T-cell (primary cell): ENCODE measurements at regions of chrX and their contacts with region 1.

Region 1: GRCh38 chrX:129976441-129976840 is 6.0 kb upstream of the BCORL1 start:
- DNase-seq: no peak
- ATAC-seq: no peak
- H3K4me3 ChIP-seq: no peak overlapping the region
- H3K4me3 Mint-ChIP-seq: no peak overlapping the region
- H3K27ac ChIP-seq: no peak overlapping the region
- H3K27ac Mint-ChIP-seq: no peak overlapping the region
- H3K4me1 ChIP-seq: peaks cover 3 to 14% of the 10 kb centered on the region in 2 experiments
- H3K4me1 Mint-ChIP-seq: peaks cover 3 to 21% (median 11%) of the 10 kb centered on the region in 3 donors
- H3K27me3 ChIP-seq: no peaks in the 10 kb centered on the region
- H3K27me3 Mint-ChIP-seq: peaks cover 0 to 6% of the 10 kb centered on the region in 2 donors

Region 2: DNA sequence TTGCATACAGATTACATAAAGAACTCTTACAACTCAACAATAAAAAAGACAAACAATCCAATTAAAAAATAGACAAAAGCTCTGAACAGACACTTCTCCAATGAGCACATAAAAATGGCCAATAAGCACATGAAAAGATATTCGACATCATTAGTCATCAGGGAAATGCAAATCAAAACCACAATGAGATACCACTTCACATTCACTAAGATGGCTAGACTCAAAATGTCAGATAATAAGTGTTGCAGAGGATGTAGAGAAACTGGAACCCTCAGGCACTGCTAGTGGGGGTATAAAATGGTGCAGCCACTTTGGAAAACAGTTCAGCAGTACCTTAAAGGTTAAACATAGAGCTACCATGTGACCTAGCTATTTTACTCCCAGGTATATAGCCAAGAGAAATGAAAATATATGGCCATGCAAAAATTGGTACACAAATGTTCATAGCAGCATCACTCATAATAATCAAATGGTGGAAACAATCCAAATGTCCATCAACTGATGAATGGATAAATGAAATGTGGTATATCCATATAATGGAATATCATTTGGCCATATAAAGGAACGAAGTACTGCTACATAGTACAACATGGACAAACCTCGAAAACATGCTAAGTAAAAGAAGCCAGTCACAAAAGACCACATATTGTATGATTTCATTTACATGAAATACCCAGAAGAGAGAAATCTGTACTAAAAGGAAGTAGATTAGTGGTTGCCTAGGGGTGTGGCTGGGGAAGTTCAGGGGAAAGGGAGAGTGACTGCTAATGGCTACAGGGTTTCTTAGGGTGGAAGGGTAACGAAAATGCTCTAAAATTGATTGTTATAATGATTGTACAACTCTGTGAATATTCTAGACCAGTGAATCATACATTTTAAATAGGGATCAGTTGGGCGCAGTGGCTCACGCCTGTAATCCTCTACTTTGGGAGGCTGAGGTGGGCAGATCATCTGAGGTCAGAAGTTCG is 167.3 kb before region 1 on chrX:
- CTCF ChIA-PET with region 1: no interaction called
- POLR2A ChIA-PET with region 1: no interaction called
- DNase-seq: no peak
- ATAC-seq: peak in 2 of 4 experiments; percentile 36 to 60
- H3K4me3 ChIP-seq: no peak overlapping the region
- H3K4me3 Mint-ChIP-seq: no peak overlapping the region
- H3K27ac ChIP-seq: no peak overlapping the region
- H3K27ac Mint-ChIP-seq: peak overlapping the region in 1 of 2 donors; percentile 55
- H3K4me1 ChIP-seq: no peaks in the 10 kb centered on the region
- H3K4me1 Mint-ChIP-seq: peaks cover 7 to 17% (median 12%) of the 10 kb centered on the region in 3 donors
- H3K27me3 ChIP-seq: no peaks in the 10 kb centered on the region
- H3K27me3 Mint-ChIP-seq: no peaks in the 10 kb centered on the region

Region 3: GRCh38 chrX:129961180-129962083 is 15.0 kb before region 1 on chrX:
- CTCF ChIA-PET with region 1: no interaction called
- POLR2A ChIA-PET with region 1: interaction called, 3 to 14 read pairs
- DNase-seq: peak in 32 of 35 experiments; percentile 30 to 69 (median 50)
- ATAC-seq: peak; percentile 88 to 92 (median 90)
- H3K4me3 ChIP-seq: peak overlapping the region; percentile 43 to 52
- H3K4me3 Mint-ChIP-seq: peak overlapping the region; percentile 64 to 75 (median 74)
- H3K27ac ChIP-seq: peak overlapping the region; percentile 79
- H3K27ac Mint-ChIP-seq: peak overlapping the region; percentile 90 to 92
- H3K4me1 ChIP-seq: peaks cover 5 to 34% of the 10 kb centered on the region in 2 experiments
- H3K4me1 Mint-ChIP-seq: peaks cover 15 to 30% (median 19%) of the 10 kb centered on the region in 3 donors
- H3K27me3 ChIP-seq: no peaks in the 10 kb centered on the region
- H3K27me3 Mint-ChIP-seq: no peaks in the 10 kb centered on the region